ENCODE measurements at regions of chr16 and their contacts with region 1.

Region 1: GRCh38 chr16:17467923-17468540 is 2.7 kb downstream of the XYLT1 start:
- DNase-seq: peak; percentile 49 to 62
- H3K4me3 ChIP-seq: no peak overlapping the region
- H3K4me3 Mint-ChIP-seq: peak overlapping the region; percentile 79
- H3K27ac Mint-ChIP-seq: peak overlapping the region; percentile 11
- H3K4me1 ChIP-seq: peaks cover 51% of the 10 kb centered on the region
- H3K4me1 Mint-ChIP-seq: peaks cover 43% of the 10 kb centered on the region
- H3K27me3 ChIP-seq: no peaks in the 10 kb centered on the region
- H3K27me3 Mint-ChIP-seq: no peaks in the 10 kb centered on the region
- CTCF ChIP-seq: peak; percentile 48 to 68

Region 2: GRCh38 chr16:17211797-17212196 is 256.2 kb before region 1 on chr16:
- CTCF ChIA-PET with region 1: interaction called, 3 read pairs
- POLR2A ChIA-PET with region 1: no interaction called
- intact Hi-C with region 1: loop called (anchors 5 kb)
- DNase-seq: peak; percentile 46 to 60
- H3K4me3 ChIP-seq: no peak overlapping the region
- H3K4me3 Mint-ChIP-seq: no peak overlapping the region
- H3K27ac Mint-ChIP-seq: no peak overlapping the region
- H3K4me1 ChIP-seq: no peaks in the 10 kb centered on the region
- H3K4me1 Mint-ChIP-seq: no peaks in the 10 kb centered on the region
- H3K27me3 ChIP-seq: no peaks in the 10 kb centered on the region
- H3K27me3 Mint-ChIP-seq: no peaks in the 10 kb centered on the region
- CTCF ChIP-seq: peak; percentile 75 to 76

Region 3: DNA sequence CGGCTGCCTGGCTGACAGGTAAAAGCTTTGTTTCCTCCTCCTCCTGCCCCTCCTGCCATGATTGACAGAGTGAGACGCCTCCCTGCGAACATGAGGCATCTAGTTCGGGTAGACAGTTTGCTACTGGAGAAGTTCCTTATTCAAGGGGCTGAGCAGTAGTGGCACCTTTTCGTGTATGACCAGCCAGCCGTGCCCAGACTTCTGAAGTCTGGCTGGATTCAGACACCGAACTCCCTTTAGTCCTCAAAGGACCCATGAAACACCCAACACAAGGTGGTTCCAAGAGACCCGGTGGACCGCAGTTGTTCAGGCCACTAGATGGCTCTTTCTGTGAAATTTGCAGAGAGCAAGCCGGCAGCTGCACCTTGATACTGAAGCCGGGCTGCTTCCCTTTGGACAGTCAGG is 190.1 kb before region 1 on chr16:
- CTCF ChIA-PET with region 1: interaction called, 6 read pairs
- POLR2A ChIA-PET with region 1: no interaction called
- intact Hi-C with region 1: loop called (anchors 1 kb)
- DNase-seq: peak; percentile 44 to 45
- H3K4me3 ChIP-seq: no peak overlapping the region
- H3K4me3 Mint-ChIP-seq: no peak overlapping the region
- H3K27ac Mint-ChIP-seq: no peak overlapping the region
- H3K4me1 ChIP-seq: peaks cover 40% of the 10 kb centered on the region
- H3K4me1 Mint-ChIP-seq: peaks cover 19% of the 10 kb centered on the region
- H3K27me3 ChIP-seq: no peaks in the 10 kb centered on the region
- H3K27me3 Mint-ChIP-seq: no peaks in the 10 kb centered on the region
- CTCF ChIP-seq: peak in 1 of 2 experiments; percentile 63

Region 4: DNA sequence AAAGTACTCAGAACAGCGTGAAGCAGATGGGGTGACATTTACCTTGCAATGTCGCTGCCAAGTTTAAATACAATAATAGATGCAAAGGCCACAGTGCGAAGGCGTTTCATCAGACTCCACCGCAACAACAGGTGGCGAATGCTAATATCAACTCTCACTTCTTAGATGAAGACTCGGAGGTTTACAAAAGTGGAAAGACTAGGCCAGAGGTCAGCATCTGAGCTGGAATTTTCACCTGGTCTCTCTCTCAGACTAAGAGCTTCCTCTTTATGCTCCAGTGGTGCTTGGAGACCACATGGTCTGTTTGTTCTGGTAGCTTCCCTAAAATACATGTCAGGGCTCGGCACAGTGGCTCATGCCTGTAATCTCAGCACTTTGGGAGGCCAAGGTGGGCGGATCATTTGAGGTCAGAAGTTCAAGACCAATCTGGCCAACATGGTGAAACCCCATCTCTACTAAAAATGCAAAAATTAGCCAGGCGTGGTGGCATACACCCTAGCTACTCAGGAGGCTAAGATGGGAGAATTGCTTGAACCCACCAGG is 166.4 kb before region 1 on chr16:
- CTCF ChIA-PET with region 1: interaction called, 3 read pairs
- POLR2A ChIA-PET with region 1: no interaction called
- intact Hi-C with region 1: loop called (anchors 10 kb)
- DNase-seq: no peak
- H3K4me3 ChIP-seq: no peak overlapping the region
- H3K4me3 Mint-ChIP-seq: no peak overlapping the region
- H3K27ac Mint-ChIP-seq: no peak overlapping the region
- H3K4me1 ChIP-seq: peaks cover 45% of the 10 kb centered on the region
- H3K4me1 Mint-ChIP-seq: peaks cover 27% of the 10 kb centered on the region
- H3K27me3 ChIP-seq: no peaks in the 10 kb centered on the region
- H3K27me3 Mint-ChIP-seq: no peaks in the 10 kb centered on the region
- CTCF ChIP-seq: no peak

Region 5: DNA sequence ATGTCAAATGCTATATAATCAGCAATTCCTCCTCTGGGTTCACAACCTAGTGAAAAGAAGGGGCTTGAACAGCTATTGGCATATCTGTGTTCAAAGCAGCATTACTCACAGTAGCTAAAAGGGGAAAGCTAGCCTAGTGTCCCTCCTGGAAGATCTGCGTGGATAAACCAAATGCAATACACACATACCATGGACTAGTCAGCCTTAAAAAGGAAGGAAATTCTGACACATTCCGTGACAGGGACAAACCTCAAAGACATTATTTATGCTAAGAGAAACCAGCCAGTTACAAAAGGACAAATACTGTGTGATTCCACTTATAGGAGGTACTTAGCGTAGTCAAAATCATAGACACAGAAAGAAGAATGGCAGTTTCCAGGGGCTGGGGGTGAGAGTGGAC is 87.4 kb before region 1 on chr16:
- CTCF ChIA-PET with region 1: no interaction called
- POLR2A ChIA-PET with region 1: no interaction called
- intact Hi-C with region 1: loop called (anchors 10 kb)
- DNase-seq: no peak
- H3K4me3 ChIP-seq: no peak overlapping the region
- H3K4me3 Mint-ChIP-seq: no peak overlapping the region
- H3K27ac Mint-ChIP-seq: no peak overlapping the region
- H3K4me1 ChIP-seq: no peaks in the 10 kb centered on the region
- H3K4me1 Mint-ChIP-seq: peaks cover 7% of the 10 kb centered on the region
- H3K27me3 ChIP-seq: no peaks in the 10 kb centered on the region
- H3K27me3 Mint-ChIP-seq: no peaks in the 10 kb centered on the region
- CTCF ChIP-seq: no peak

Region 6: GRCh38 chr16:17511340-17511739 is 43.3 kb after region 1 on chr16:
- CTCF ChIA-PET with region 1: no interaction called
- POLR2A ChIA-PET with region 1: no interaction called
- intact Hi-C with region 1: no loop called
- DNase-seq: no peak
- H3K4me3 ChIP-seq: no peak overlapping the region
- H3K4me3 Mint-ChIP-seq: no peak overlapping the region
- H3K27ac Mint-ChIP-seq: no peak overlapping the region
- H3K4me1 ChIP-seq: peaks cover 3% of the 10 kb centered on the region; the same call in 1 of the 2 replicates
- H3K4me1 Mint-ChIP-seq: no peaks in the 10 kb centered on the region
- H3K27me3 ChIP-seq: no peaks in the 10 kb centered on the region
- H3K27me3 Mint-ChIP-seq: no peaks in the 10 kb centered on the region
- CTCF ChIP-seq: no peak